ENCODE measurements at regions of chr9 and their contacts with region 1.

Region 1: GRCh38 chr9:132235946-132236661 is 74.2 kb downstream of the NTNG2 start:
- DNase-seq: peak; percentile 66 to 96 (median 88)
- ATAC-seq: peak; percentile 12 to 45 (median 40)
- H3K4me3 ChIP-seq: no peak overlapping the region
- H3K27ac ChIP-seq: no peak overlapping the region
- H3K4me1 ChIP-seq: peaks cover 0 to 6% (median 6%) of the 10 kb centered on the region in 3 donors
- H3K27me3 ChIP-seq: no peaks in the 10 kb centered on the region
- CTCF ChIP-seq: peak; percentile 93 to 97 (median 96)

Region 2: DNA sequence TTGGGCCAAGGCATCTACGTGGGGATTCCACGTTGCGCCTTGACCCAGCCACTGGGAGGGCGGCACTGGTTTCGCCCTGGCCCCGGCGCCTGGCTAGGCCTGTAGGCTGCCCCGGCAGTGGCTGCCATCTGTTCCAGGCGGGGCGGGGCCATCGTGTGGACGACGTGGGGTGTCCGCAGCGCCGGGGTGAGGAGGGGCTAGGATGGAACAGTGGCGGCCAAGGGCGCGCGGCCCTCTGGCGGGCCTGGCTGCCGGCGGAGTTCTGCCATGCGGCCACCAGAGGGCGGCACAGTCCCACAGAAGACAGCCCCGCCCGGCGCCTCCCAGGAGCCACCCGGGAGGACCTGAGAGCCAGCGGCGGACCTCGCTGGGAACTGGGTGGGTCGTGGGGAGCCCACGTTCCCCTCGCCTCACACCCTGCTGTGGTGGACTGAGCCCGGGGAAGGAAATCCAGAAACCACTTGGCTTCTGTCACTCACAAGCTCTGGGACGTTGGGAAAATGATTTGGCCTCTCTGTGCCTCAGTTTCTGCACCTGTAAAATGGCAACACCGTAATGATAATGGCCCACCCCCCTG is 473.7 kb before region 1 on chr9:
- intact Hi-C with region 1: loop called in 1 of 3 experiments (anchors 5 kb)
- DNase-seq: peak; percentile 34 to 94 (median 82)
- ATAC-seq: peak; percentile 94 to 99 (median 97)
- H3K4me3 ChIP-seq: no peak overlapping the region
- H3K27ac ChIP-seq: no peak overlapping the region
- H3K4me1 ChIP-seq: no peaks in the 10 kb centered on the region
- H3K27me3 ChIP-seq: no peaks in the 10 kb centered on the region
- CTCF ChIP-seq: peak; percentile 85 to 95 (median 94)

Region 3: GRCh38 chr9:131839281-131840084 is 396.6 kb before region 1 on chr9:
- intact Hi-C with region 1: loop called in 1 of 3 experiments (anchors 10 kb)
- DNase-seq: no peak
- ATAC-seq: no peak
- H3K4me3 ChIP-seq: no peak overlapping the region
- H3K27ac ChIP-seq: no peak overlapping the region
- H3K4me1 ChIP-seq: no peaks in the 10 kb centered on the region
- H3K27me3 ChIP-seq: no peaks in the 10 kb centered on the region
- CTCF ChIP-seq: no peak

Region 4: DNA sequence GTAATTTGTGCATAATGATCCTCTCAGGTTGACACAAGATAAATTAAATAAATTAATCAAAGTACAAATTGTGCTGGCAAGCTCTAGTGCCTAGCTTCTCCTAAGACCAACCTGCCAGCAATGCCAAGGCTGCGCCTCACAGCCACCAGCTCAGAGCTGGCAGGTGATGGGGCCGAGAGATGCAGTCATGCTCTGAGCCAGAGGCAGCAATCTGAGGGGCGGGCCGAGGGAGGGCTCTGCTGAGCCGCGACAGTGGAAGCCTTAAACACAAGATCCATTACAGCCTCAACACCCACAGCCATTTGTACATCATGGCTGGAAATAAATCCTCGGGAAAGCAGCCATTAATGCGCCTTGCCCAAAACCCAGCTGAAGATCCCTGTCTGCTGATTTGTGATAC is 176.7 kb before region 1 on chr9:
- intact Hi-C with region 1: no loop called
- DNase-seq: no peak
- ATAC-seq: no peak
- H3K4me3 ChIP-seq: no peak overlapping the region
- H3K27ac ChIP-seq: no peak overlapping the region
- H3K4me1 ChIP-seq: no peaks in the 10 kb centered on the region
- H3K27me3 ChIP-seq: no peaks in the 10 kb centered on the region
- CTCF ChIP-seq: no peak

Region 5: GRCh38 chr9:132169672-132170392 is 66.3 kb before region 1 on chr9:
- intact Hi-C with region 1: loop called in 2 of 3 experiments (anchors 5 to 10 kb)
- DNase-seq: peak in 5 of 6 donors; percentile 38 to 86 (median 70)
- ATAC-seq: peak; percentile 30 to 77 (median 72)
- H3K4me3 ChIP-seq: no peak overlapping the region
- H3K27ac ChIP-seq: no peak overlapping the region
- H3K4me1 ChIP-seq: peaks cover under 1 to 5% (median 4%) of the 10 kb centered on the region in 3 donors
- H3K27me3 ChIP-seq: no peaks in the 10 kb centered on the region
- CTCF ChIP-seq: peak; percentile 72 to 87 (median 82)

Measured in pancreas (tissue), 10 donors.